Heart left ventricle (tissue), 16 donors: ENCODE measurements at regions of chr11 and their contacts with region 1.

Region 1: GRCh38 chr11:47152953-47153950 is 23.4 kb downstream of the ARFGAP2 start:
- DNase-seq: peak; percentile 74 to 81 (median 78)
- ATAC-seq: peak; percentile 62 to 79 (median 76)
- H3K4me3 ChIP-seq: no peak overlapping the region
- H3K27ac ChIP-seq: peak overlapping the region in 1 of 12 donors; percentile 32
- H3K4me1 ChIP-seq: peaks cover 0 to 30% (median 22%) of the 10 kb centered on the region in 12 donors
- H3K27me3 ChIP-seq: no peaks in the 10 kb centered on the region
- CTCF ChIP-seq: peak; percentile 84 to 98 (median 94)
- POLR2A ChIP-seq: no peak

Region 2: DNA sequence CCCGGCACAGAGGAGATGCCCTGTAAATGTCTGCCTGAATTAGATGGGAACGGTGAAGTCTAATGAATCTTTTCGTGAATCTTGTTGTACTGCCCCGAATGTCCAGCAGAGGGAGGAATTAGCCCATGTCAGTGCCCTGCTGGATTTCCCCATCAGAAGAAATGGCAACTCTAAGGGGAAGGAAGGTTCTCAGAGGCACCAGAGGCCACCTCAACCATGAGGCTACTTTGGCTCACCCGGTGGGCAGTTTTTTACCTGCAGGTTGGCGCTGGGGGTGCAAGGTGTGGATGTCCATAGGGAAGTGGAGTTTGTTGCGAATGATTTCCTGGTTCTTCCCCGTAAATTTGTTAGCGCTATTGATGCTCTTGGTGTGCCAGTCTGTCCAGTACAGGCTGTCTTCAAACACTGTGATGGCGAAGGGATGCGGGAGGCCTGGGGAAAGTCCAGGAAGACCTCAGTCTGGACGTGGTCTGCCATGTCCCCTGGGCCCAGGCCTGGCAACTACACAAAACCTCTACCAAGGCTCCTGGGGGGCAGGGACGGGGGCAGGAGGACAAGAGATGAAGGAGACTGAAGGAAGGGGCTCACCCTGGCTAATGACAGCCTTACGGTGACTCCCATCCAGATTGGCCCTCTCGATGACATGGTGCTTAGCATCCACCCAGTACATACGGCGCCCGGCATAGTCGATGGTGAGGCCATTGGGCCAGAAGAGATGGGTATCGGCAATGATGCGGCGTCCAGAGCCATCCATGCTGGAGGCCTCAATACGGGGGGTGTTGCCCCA is 263.4 kb before region 1 on chr11:
- intact Hi-C with region 1: loop called (anchors 1 to 2 kb)
- DNase-seq: peak in 4 of 5 donors; percentile 48 to 63 (median 58)
- ATAC-seq: peak; percentile 40 to 84 (median 81)
- H3K4me3 ChIP-seq: no peak overlapping the region
- H3K27ac ChIP-seq: no peak overlapping the region
- H3K4me1 ChIP-seq: no peaks in the 10 kb centered on the region
- H3K27me3 ChIP-seq: peaks cover 0 to 4% (median 0%) of the 10 kb centered on the region in 9 donors
- CTCF ChIP-seq: peak; percentile 70 to 92 (median 83)
- POLR2A ChIP-seq: no peak

Region 3: GRCh38 chr11:47004595-47005033 is 148.6 kb before region 1 on chr11:
- intact Hi-C with region 1: loop called in 1 of 10 experiments (anchors 5 kb)
- DNase-seq: peak; percentile 69 to 89 (median 78)
- ATAC-seq: peak; percentile 99
- H3K4me3 ChIP-seq: no peak overlapping the region
- H3K27ac ChIP-seq: peak overlapping the region in 11 of 12 donors; percentile 13 to 74 (median 64)
- H3K4me1 ChIP-seq: peaks cover 0 to 37% (median 25%) of the 10 kb centered on the region in 12 donors
- H3K27me3 ChIP-seq: no peaks in the 10 kb centered on the region
- CTCF ChIP-seq: no peak
- POLR2A ChIP-seq: no peak